Sigmoid colon (tissue), 7 donors: ENCODE measurements at regions of chr2 and their contacts with region 1.

Region 1: DNA sequence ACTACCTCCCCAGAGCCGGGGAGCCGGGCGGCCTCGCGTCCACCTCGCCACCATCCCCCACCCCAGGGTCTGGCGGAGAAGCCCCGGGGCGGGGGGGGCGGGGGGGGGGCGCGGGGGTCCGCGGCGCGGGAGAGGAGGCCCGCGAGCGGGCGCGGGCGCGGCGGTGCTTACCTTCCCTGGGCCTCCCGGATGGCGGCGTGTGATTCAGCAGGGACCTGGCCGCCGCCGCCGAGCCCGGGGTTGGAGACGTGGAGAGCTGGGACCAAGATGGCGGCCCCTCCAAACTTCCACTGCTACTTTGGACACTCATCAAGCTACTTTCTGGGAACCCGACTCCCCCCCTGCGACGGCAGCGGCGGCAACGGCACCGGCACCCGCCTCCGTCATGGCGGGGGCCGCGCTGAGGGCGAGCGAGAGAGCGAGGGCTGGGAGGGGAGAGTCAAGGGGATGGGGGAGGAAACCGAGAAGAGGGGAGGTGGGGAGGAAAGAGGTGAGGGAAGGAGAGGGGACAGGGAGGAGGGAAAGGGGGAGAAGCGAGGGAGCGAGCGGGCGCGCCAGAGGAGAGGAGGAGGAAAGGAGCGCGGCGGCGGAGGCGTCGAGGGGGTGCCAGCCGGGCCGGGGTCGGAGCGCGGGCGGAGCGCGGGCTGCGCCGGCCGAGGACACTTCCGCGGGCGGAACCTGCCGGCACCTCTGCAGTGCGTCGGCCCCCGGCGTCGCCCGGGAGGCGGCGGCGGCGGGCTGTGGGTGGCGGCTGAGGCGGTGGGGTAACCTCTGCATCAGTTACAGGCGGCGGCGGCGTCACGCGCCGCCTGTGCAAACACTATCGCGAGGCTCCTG is at the start of gene TLK1:
- DNase-seq: peak; percentile 82
- H3K4me3 ChIP-seq: peak within 1 kb of the TSS; percentile 67 to 93 (median 80)
- H3K27ac ChIP-seq: peak within 1 kb of the TSS; percentile 88 to 98 (median 97)
- H3K4me1 ChIP-seq: peaks cover 0 to 37% (median 16%) of the 10 kb centered on the region in 4 donors
- H3K27me3 ChIP-seq: no peaks in the 10 kb centered on the region
- CTCF ChIP-seq: no peak
- EP300 ChIP-seq: no peak
- POLR2A ChIP-seq: no peak
- total RNA-seq, gene TLK1: 37.9 to 60.6 (median 49.0) TPM

Region 2: GRCh38 chr2:170715062-170715931 is 445.0 kb before region 1 on chr2 and contains the start of gene SP5:
- intact Hi-C with region 1: no loop called
- DNase-seq: peak; percentile 85
- H3K4me3 ChIP-seq: peak within 1 kb of the TSS; percentile 27 to 58 (median 50)
- H3K27ac ChIP-seq: peak within 1 kb of the TSS; percentile 25 to 61 (median 50)
- H3K4me1 ChIP-seq: peaks cover 0 to 55% (median 48%) of the 10 kb centered on the region in 4 donors
- H3K27me3 ChIP-seq: peaks cover 47 to 97% (median 80%) of the 10 kb centered on the region in 3 donors
- CTCF ChIP-seq: no peak
- EP300 ChIP-seq: no peak
- POLR2A ChIP-seq: no peak
- total RNA-seq, gene SP5: 0.81 to 4.6 (median 2.0) TPM

Region 3: DNA sequence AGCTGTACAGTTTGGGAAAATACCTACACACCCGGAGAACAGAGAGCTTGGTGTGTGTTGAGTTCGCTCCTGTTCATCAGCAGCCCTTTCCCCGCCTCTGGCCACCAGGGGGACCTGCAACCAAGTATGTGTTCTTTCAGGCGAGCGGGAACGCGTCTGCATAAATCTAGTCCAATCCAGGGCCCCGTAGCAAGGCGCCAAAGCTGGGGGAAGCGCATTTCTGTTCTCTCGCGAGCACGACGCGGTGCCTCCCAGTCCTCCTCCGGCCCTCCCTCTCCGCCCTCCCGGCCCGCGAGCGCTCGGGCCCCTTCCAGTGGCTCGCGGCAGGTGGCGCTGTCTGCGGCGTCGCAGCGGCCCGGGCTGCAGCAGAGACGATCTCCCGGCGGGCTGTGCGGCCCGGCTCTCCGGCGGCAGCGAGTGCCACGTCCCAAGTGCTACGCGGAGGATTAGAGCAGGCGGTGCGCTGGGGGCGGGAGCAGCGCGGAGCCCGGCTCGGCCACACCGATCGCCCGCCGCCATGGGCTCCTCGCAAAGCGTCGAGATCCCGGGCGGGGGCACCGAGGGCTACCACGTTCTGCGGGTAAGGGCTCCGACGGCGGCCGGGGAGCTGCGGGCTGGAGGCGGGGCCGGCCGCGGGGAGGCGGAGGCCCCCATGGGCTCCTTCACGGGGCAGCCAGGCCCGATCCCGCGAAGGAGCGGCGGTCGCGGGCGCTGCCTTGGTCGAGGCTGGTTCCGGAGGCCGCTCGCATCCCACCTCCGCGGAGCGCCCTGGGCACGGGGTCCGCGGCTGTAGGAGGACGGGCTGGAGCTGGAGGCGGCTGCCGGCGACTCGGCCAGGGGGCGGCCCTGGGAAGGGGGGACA is 231.3 kb before region 1 on chr2 and contains the start of gene GORASP2:
- intact Hi-C with region 1: loop called (anchors 2 kb)
- DNase-seq: peak; percentile 99
- H3K4me3 ChIP-seq: peak within 1 kb of the TSS; percentile 77 to 94 (median 84)
- H3K27ac ChIP-seq: peak within 1 kb of the TSS; percentile 93 to 97 (median 96)
- H3K4me1 ChIP-seq: peaks cover 0 to 45% (median 32%) of the 10 kb centered on the region in 4 donors
- H3K27me3 ChIP-seq: no peaks in the 10 kb centered on the region
- CTCF ChIP-seq: peak; percentile 89 to 94 (median 92)
- EP300 ChIP-seq: peak in 1 of 4 donors; percentile 66
- POLR2A ChIP-seq: peak; percentile 46 to 51
- total RNA-seq, gene GORASP2: 32.4 to 51.4 (median 41.8) TPM

Region 4: GRCh38 chr2:171253900-171254655 is 93.7 kb after region 1 on chr2:
- intact Hi-C with region 1: loop called (anchors 5 kb)
- DNase-seq: no peak
- H3K4me3 ChIP-seq: peak overlapping the region in 2 of 4 donors; percentile 0 to 3
- H3K27ac ChIP-seq: peak overlapping the region; percentile 63 to 75 (median 70)
- H3K4me1 ChIP-seq: peaks cover 0 to 23% (median 14%) of the 10 kb centered on the region in 4 donors
- H3K27me3 ChIP-seq: no peaks in the 10 kb centered on the region
- CTCF ChIP-seq: peak in 2 of 4 experiments; percentile 22 to 44
- EP300 ChIP-seq: no peak
- POLR2A ChIP-seq: no peak

Region 5: GRCh38 chr2:171416009-171416926 is 255.9 kb after region 1 on chr2:
- intact Hi-C with region 1: loop called (anchors 2 kb)
- DNase-seq: peak; percentile 94
- H3K4me3 ChIP-seq: no peak overlapping the region
- H3K27ac ChIP-seq: peak overlapping the region; percentile 62 to 77 (median 66)
- H3K4me1 ChIP-seq: peaks cover 0 to 29% (median 13%) of the 10 kb centered on the region in 4 donors
- H3K27me3 ChIP-seq: no peaks in the 10 kb centered on the region
- CTCF ChIP-seq: peak; percentile 76 to 81 (median 78)
- EP300 ChIP-seq: no peak
- POLR2A ChIP-seq: no peak

Region 6: GRCh38 chr2:171522052-171522787 is 361.9 kb after region 1 on chr2 and contains the start of gene CYBRD1:
- intact Hi-C with region 1: loop called (anchors 5 kb)
- DNase-seq: peak; percentile 96
- H3K4me3 ChIP-seq: peak within 1 kb of the TSS; percentile 83 to 99 (median 93)
- H3K27ac ChIP-seq: peak within 1 kb of the TSS; percentile 93 to 98 (median 95)
- H3K4me1 ChIP-seq: peaks cover 0 to 26% (median 21%) of the 10 kb centered on the region in 4 donors
- H3K27me3 ChIP-seq: no peaks in the 10 kb centered on the region
- CTCF ChIP-seq: no peak
- EP300 ChIP-seq: peak in 1 of 4 donors; percentile 56
- POLR2A ChIP-seq: peak; percentile 58 to 72
- total RNA-seq, gene CYBRD1: 119 to 250 (median 197) TPM

Region 7: DNA sequence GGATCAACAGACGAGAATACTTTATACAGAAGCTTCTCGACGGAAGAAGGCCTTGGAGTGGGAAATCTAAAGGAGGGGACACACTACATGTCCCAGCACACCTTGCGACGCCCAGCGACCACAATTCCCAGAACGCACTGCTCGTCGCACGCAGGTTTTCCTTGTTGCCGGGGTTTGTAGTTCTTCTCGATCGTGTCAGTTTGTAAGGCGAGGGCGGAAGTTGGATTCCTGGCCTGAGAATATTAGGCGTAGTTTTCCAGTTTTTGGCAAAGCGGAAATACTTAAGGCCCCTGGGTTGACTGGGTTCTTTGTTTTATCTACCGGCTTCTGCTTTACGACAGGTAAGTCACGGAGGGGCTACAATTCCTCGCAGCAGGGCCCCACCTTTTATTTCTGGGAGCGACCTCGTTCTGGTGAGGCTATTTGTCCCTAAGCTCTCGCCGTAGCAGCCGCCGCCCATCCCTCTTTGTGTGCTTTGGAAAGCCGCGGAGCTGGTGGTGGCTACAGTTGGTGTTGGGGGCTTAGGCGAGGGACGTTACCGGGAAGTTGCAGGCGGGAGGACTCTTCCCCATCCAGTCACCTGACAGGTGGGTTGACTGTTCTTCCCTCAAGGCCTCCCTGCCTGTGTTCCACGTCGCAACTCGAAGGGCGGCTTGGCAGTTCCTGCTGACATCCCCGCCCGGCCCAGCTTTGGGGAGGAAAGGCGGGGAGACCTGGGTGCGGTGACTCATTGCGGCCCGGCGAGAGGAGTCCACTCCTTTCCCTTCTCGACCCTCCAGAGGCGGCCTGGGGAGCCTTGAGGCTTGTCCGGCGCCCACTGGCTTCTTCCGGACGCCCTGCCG is 527.2 kb after region 1 on chr2 and contains the start of gene DYNC1I2:
- intact Hi-C with region 1: no loop called
- DNase-seq: peak; percentile 96
- H3K4me3 ChIP-seq: peak within 1 kb of the TSS; percentile 55 to 91 (median 75)
- H3K27ac ChIP-seq: peak within 1 kb of the TSS; percentile 81 to 88 (median 85)
- H3K4me1 ChIP-seq: peaks cover 0 to 19% (median 16%) of the 10 kb centered on the region in 4 donors
- H3K27me3 ChIP-seq: no peaks in the 10 kb centered on the region
- CTCF ChIP-seq: peak in 1 of 4 experiments; percentile 16
- EP300 ChIP-seq: no peak
- POLR2A ChIP-seq: peak in 1 of 2 donors; percentile 31
- total RNA-seq, gene DYNC1I2: 103 to 133 (median 127) TPM